ENCODE measurements at regions of chrX and their contacts with region 1.

Region 1: GRCh38 chrX:24395775-24396174 is 35.3 kb downstream of the SUPT20HL1 start:
- DNase-seq: peak in 1 of 2 donors; percentile 82
- H3K4me3 ChIP-seq: peak overlapping the region in 1 of 2 donors; percentile 0
- H3K27ac ChIP-seq: peak overlapping the region; percentile 79
- H3K4me1 ChIP-seq: peaks cover 0 to 14% of the 10 kb centered on the region in 2 donors
- H3K27me3 ChIP-seq: no peaks in the 10 kb centered on the region
- CTCF ChIP-seq: peak; percentile 78 to 86 (median 82)

Region 2: GRCh38 chrX:24169211-24169610 is 226.6 kb before region 1 on chrX:
- intact Hi-C with region 1: no loop called
- DNase-seq: no peak
- H3K4me3 ChIP-seq: no peak overlapping the region
- H3K27ac ChIP-seq: peak overlapping the region in 1 of 2 donors; percentile 2
- H3K4me1 ChIP-seq: peaks cover 6 to 40% of the 10 kb centered on the region in 2 donors
- H3K27me3 ChIP-seq: no peaks in the 10 kb centered on the region
- CTCF ChIP-seq: no peak

Region 3: DNA sequence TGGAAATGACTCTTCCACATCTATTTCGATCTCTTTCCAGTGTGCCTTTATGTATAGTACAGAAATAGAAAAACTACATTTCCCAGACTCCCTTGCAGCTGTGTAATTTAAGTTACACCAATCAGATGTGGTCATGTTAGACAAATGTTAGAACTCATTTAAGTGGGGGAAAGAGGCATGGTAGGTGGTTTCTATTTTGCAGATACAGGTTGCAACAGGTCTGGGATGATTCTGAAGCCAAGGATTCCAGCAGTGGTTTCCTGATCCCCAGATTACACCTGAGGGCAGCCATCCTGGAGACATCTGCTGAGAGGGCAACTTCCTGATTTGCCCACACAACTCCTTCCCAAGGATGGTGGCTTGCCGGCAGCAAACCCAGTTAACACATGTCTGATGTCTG is 30.6 kb after region 1 on chrX:
- intact Hi-C with region 1: loop called (anchors 2 kb)
- DNase-seq: no peak
- H3K4me3 ChIP-seq: no peak overlapping the region
- H3K27ac ChIP-seq: peak overlapping the region; percentile 71 to 79
- H3K4me1 ChIP-seq: peaks cover 0 to 18% of the 10 kb centered on the region in 2 donors
- H3K27me3 ChIP-seq: no peaks in the 10 kb centered on the region
- CTCF ChIP-seq: no peak

Region 4: GRCh38 chrX:24448762-24449250 is 53.0 kb after region 1 on chrX:
- intact Hi-C with region 1: loop called (anchors 5 kb)
- DNase-seq: no peak
- H3K4me3 ChIP-seq: no peak overlapping the region
- H3K27ac ChIP-seq: peak overlapping the region; percentile 76
- H3K4me1 ChIP-seq: peaks cover 0 to 15% of the 10 kb centered on the region in 2 donors
- H3K27me3 ChIP-seq: no peaks in the 10 kb centered on the region
- CTCF ChIP-seq: no peak

Region 5: DNA sequence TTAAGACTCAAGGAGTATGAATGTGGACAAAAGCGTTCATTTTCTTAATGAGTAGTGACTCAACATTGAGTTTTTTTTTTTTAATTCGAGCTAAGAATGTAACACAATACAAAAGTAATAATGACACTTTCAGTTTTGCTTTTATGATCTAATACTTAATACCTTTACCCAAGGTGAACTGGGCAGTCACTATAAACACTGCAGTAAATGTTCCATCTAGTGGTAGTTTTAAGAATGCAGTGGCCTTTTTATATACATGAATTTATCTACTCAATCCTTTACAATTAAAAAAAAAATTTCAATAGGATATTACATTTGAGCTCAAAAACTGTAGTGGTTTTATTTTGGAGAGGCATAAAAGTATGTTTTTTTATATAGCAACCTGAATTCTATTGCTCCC is 103.2 kb after region 1 on chrX:
- intact Hi-C with region 1: loop called (anchors 1 kb)
- DNase-seq: no peak
- H3K4me3 ChIP-seq: no peak overlapping the region
- H3K27ac ChIP-seq: no peak overlapping the region
- H3K4me1 ChIP-seq: peaks cover 0 to 7% of the 10 kb centered on the region in 2 donors
- H3K27me3 ChIP-seq: no peaks in the 10 kb centered on the region
- CTCF ChIP-seq: peak; percentile 34 to 54 (median 43)

Region 6: DNA sequence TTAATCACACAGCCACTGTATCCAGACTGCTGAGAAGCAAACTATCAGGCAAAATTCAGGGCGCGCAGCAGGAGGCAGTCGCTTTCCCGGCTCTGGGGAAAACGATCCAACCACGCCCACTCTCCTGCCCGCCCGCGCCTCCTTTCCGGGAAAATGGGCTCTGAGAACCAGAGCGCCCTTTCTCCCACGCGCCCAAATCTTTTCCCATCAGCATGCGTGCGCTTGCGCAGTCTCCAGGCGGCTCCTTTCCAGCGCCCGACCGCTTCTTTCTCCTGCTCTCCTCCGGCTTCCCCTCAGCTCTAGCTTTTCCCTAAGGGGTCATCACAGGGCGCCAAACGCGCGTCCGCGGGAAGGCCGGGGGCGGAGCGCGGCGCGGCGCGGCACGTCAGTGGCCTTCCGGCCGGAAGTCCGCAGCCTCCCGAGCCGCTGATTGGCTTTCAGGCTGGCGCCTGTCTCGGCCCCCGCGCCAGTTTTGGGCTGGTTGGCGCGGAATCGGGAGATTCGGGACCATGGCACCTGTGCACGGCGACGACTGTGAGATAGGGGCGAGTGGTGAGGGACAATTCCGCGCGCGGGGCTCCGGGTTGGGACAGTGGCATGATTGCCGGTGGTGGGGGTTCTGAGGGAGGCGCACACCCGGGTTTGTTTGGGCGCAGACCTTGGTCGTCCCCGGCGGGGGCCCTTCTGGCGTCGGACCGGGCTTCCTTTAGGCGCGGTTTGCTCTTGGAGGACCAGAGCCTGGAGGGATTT is 297.9 kb after region 1 on chrX and contains the start of gene POLA1:
- intact Hi-C with region 1: loop called (anchors 2 kb)
- DNase-seq: peak; percentile 61 to 95
- H3K4me3 ChIP-seq: peak within 1 kb of the TSS; percentile 50 to 77
- H3K27ac ChIP-seq: peak within 1 kb of the TSS; percentile 76 to 84
- H3K4me1 ChIP-seq: no peaks in the 10 kb centered on the region
- H3K27me3 ChIP-seq: no peaks in the 10 kb centered on the region
- CTCF ChIP-seq: peak in 1 of 3 experiments; percentile 16
- total RNA-seq, gene POLA1: 6.0 TPM

Region 7: DNA sequence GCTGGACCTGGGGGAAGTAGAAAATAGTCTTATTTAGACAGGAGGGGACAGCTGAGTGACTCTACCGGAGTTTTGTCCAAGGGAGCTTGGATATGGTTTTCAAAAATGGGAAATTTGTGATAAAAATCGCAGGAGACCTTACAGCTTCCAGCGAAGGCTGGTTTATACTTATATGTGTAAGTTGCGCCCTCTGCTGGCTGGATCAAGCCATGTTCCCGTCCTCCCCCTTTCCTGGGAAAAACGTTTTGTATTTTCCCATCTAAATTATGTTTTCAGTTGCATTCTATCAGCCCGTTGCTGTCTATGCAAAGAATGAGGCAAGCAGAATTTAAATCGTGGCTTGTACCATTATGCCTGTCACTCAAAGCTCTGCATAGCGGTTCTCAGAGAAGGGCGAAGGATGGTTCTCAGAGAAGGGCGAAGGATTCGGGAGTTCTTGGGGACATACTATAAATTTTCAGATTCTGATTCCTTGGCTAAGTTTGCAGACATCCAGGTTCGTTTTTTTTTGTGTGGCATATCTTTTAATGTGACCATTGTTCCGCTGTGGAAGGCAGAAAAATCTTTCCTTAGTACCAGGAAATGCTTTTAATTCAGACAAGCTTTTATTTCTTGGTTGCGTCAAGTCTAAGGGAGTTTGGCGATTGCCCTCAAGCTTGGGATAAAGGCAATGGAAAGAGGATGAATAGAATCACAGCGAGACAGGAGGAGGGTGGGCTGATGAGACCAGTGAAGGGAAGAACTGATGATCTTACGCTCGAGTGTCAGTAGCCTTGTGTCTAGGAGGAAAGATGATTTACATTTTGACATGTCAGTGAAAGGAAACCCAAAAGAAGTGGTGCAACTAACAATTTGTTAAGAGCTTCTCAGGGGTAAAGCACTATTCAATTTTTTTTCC is 748.5 kb after region 1 on chrX:
- intact Hi-C with region 1: loop called (anchors 10 kb)
- DNase-seq: peak in 1 of 2 donors; percentile 73
- H3K4me3 ChIP-seq: peak overlapping the region; percentile 16 to 23
- H3K27ac ChIP-seq: no peak overlapping the region
- H3K4me1 ChIP-seq: no peaks in the 10 kb centered on the region
- H3K27me3 ChIP-seq: no peaks in the 10 kb centered on the region
- CTCF ChIP-seq: peak; percentile 33 to 74 (median 52)